ENCODE measurements at regions of chr2 and their contacts with region 1.

Region 1: GRCh38 chr2:42865884-42866881 is 73.8 kb upstream of the HAAO start:
- DNase-seq: no peak
- H3K4me3 ChIP-seq: no peak overlapping the region
- H3K27ac ChIP-seq: peak overlapping the region; percentile 87
- H3K4me1 ChIP-seq: peaks cover 36% of the 10 kb centered on the region
- H3K27me3 ChIP-seq: no peaks in the 10 kb centered on the region
- CTCF ChIP-seq: no peak
- POLR2A ChIP-seq: no peak

Region 2: DNA sequence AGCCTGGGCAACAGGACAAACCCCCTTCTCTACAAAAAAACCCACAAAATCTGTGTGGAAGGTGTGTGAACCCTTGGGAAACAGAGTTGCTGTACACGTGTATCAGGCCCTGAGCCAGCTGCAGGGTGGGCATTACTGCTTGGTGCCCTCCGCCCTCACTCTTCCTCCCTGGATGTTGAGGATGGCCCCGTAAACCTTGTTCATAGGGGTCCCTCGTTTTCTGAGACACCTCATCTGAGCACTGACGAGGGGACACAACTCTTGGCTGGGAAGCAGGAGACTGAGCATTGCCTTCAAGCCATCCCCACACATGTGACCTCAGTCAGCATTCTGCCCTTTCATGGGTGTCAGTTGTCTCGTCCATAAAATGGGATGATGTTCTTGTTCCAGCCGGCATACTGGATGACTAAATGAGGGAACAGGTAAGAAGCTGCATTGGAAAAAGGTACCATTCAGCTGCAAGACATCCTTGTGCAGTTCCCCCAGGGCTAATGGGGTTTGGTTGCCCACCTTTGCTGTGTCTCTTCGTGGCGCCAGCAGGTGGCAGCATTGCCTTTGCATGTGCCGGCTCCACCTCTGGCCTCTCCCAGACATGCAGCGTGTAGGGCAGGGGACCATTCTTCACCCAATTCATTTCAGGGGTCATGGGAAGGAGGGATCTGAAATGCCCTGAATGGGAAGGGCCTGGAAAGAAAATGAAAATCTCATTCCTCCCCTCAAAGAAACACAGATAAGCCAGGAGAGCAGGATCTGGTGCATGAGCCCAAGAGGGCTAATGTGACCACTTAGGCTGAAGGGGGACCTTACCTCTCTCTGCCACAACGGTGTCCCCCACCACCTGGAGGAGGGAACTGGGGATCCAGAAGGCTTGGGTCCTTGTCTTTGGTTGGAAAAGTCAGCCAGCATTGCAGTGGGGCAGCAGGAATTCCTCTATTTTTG is 37.4 kb before region 1 on chr2:
- intact Hi-C with region 1: loop called (anchors 5 kb)
- DNase-seq: peak; percentile 90 to 95
- H3K4me3 ChIP-seq: no peak overlapping the region
- H3K27ac ChIP-seq: peak overlapping the region; percentile 78
- H3K4me1 ChIP-seq: peaks cover 30% of the 10 kb centered on the region
- H3K27me3 ChIP-seq: no peaks in the 10 kb centered on the region
- CTCF ChIP-seq: peak; percentile 90 to 93 (median 90)
- POLR2A ChIP-seq: no peak